Activated CD4-positive, alpha-beta memory T cell treated with anti-CD3 and anti-CD28 coated beads for 36 hours (primary cell): ENCODE measurements at regions of chr21 and their contacts with region 1.

Region 1: GRCh38 chr21:31343680-31344480 is at the start of gene TIAM1:
- DNase-seq: peak; percentile 64
- H3K4me3 Mint-ChIP-seq: peak within 1 kb of the TSS; percentile 93
- H3K27ac Mint-ChIP-seq: peak within 1 kb of the TSS; percentile 82
- H3K4me1 Mint-ChIP-seq: peaks cover 64% of the 10 kb centered on the region
- H3K27me3 Mint-ChIP-seq: no peaks in the 10 kb centered on the region
- total RNA-seq, gene TIAM1: 74.8 to 74.9 TPM

Region 2: GRCh38 chr21:31132574-31133242 is 211.2 kb before region 1 on chr21:
- CTCF ChIA-PET with region 1: no interaction called
- POLR2A ChIA-PET with region 1: no interaction called
- intact Hi-C with region 1: loop called (anchors 2 kb)
- DNase-seq: peak; percentile 82
- H3K4me3 Mint-ChIP-seq: peak overlapping the region; percentile 64
- H3K27ac Mint-ChIP-seq: peak overlapping the region; percentile 95
- H3K4me1 Mint-ChIP-seq: peaks cover 65% of the 10 kb centered on the region
- H3K27me3 Mint-ChIP-seq: no peaks in the 10 kb centered on the region

Region 3: GRCh38 chr21:31198575-31198974 is 145.3 kb before region 1 on chr21:
- CTCF ChIA-PET with region 1: interaction called, 3 read pairs
- POLR2A ChIA-PET with region 1: no interaction called
- intact Hi-C with region 1: loop called (anchors 1 kb)
- DNase-seq: no peak
- H3K4me3 Mint-ChIP-seq: no peak overlapping the region
- H3K27ac Mint-ChIP-seq: no peak overlapping the region
- H3K4me1 Mint-ChIP-seq: peaks cover 44% of the 10 kb centered on the region
- H3K27me3 Mint-ChIP-seq: no peaks in the 10 kb centered on the region

Region 4: GRCh38 chr21:31293986-31294385 is 49.9 kb before region 1 on chr21:
- CTCF ChIA-PET with region 1: no interaction called
- POLR2A ChIA-PET with region 1: interaction called, 3 read pairs
- intact Hi-C with region 1: loop called (anchors 5 kb)
- DNase-seq: peak; percentile 84
- H3K4me3 Mint-ChIP-seq: no peak overlapping the region
- H3K27ac Mint-ChIP-seq: peak overlapping the region; percentile 70
- H3K4me1 Mint-ChIP-seq: peaks cover 41% of the 10 kb centered on the region
- H3K27me3 Mint-ChIP-seq: no peaks in the 10 kb centered on the region

Region 5: DNA sequence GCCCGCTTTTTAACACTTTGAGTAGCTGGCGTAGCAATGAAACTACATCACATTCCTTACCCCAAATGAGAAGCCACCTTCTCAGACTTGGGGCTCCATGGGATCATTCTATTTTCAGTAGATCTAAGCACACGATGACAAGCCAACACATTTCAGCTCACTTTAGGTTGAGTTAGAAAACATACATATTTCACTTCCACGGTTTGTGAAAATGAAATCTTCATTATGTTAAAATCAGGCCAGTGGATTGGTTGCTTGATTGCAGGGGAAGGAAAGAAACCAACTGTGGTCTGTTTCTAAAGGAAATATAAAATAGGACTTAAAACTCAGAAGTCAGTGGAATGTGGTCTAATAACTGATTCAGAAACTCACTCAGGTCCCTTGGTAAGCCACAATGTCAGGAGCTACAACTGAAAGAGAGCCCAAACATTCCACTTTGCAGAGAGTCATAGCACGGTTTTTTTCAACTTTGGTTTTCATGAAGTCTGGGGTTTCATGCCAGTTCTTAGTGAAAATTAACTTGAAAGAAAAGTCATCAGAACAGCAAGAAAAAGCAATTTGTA is 82.4 kb after region 1 on chr21:
- CTCF ChIA-PET with region 1: no interaction called
- POLR2A ChIA-PET with region 1: no interaction called
- intact Hi-C with region 1: loop called (anchors 1 kb)
- DNase-seq: no peak
- H3K4me3 Mint-ChIP-seq: no peak overlapping the region
- H3K27ac Mint-ChIP-seq: peak overlapping the region; percentile 25
- H3K4me1 Mint-ChIP-seq: peaks cover 8% of the 10 kb centered on the region
- H3K27me3 Mint-ChIP-seq: no peaks in the 10 kb centered on the region

Region 6: GRCh38 chr21:31537872-31538576 is 194.1 kb after region 1 on chr21:
- CTCF ChIA-PET with region 1: no interaction called
- POLR2A ChIA-PET with region 1: no interaction called
- intact Hi-C with region 1: no loop called
- DNase-seq: peak; percentile 42
- H3K4me3 Mint-ChIP-seq: no peak overlapping the region
- H3K27ac Mint-ChIP-seq: no peak overlapping the region
- H3K4me1 Mint-ChIP-seq: no peaks in the 10 kb centered on the region
- H3K27me3 Mint-ChIP-seq: no peaks in the 10 kb centered on the region

Region 7: DNA sequence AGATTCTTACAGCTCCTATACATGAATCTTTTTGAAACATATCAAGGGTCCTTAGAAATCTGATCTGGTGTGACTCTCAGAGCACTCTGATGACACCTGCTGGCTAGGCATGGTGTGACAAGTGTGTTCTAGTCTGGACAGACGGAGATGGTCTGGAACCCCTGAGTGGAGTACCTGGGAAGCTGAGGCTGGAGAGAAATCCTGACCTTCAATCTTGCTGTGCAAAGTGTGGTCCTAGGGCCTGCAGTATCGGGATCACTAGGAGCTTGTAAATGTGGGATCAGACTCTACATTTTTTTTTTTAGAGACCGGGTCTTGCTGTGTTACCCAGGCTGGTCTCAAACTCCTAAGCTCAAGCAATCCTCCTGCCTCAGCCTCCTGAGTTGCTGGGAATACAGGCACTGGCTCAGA is 237.0 kb after region 1 on chr21:
- CTCF ChIA-PET with region 1: interaction called, 17 read pairs
- POLR2A ChIA-PET with region 1: no interaction called
- intact Hi-C with region 1: no loop called
- DNase-seq: peak; percentile 84
- H3K4me3 Mint-ChIP-seq: no peak overlapping the region
- H3K27ac Mint-ChIP-seq: no peak overlapping the region
- H3K4me1 Mint-ChIP-seq: peaks cover 4% of the 10 kb centered on the region
- H3K27me3 Mint-ChIP-seq: peaks cover 3% of the 10 kb centered on the region